Vagina (tissue), 2 donors: ENCODE measurements at regions of chr12 and their contacts with region 1.

Region 1: DNA sequence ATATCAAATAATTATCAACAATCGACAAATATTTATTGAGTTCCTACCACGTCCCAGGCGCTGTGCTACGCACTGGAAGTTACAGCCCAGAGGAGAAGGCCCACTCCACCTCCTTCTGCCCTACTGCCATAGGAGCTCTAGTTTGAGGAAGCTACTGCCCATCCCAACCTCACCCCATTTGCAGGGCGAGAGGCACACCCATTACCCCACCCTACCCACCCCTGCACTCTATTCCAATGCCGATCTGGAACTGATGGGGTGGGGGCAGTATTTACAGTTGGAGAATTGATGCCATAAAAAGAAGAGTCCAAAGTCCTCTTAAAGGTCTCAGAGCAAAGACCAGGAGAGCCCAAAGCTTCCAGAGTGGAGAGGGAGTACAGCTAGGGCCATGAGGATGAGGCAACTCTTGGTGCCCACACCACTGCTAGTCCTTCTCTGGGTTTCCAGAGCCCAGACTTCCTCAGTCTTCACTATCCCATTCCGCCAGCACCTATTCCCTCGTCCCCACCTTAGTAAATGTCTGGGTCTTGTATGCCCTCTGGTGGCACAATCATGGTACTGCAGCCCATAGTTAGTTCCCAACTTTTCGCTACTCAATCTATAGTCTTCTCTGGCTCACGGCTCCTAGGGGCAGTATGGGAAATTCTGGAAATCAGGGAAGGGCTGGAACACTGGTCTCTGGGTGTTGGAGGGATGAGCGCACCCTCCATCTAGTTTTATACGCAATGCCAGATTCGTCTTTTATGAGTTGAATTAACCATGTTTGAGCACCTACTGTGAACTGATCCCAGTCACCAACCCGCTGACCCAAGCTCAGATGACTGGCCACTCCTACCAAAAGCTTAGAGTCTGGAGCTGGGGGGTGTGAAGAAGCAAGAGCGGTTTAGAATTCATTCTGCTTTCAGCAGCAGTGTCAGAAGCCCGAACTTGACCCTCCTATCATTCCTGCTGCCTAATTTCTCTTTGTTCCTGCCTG is 6.9 kb upstream of the ADCY6 start:
- DNase-seq: peak in 1 of 2 donors; percentile 90
- H3K4me3 ChIP-seq: no peak overlapping the region
- H3K27ac ChIP-seq: no peak overlapping the region
- H3K4me1 ChIP-seq: peaks cover 15% of the 10 kb centered on the region
- H3K27me3 ChIP-seq: no peaks in the 10 kb centered on the region
- CTCF ChIP-seq: peak; percentile 97 to 99 (median 97)
- POLR2A ChIP-seq: no peak

Region 2: GRCh38 chr12:48758221-48758620 is 37.5 kb before region 1 on chr12:
- intact Hi-C with region 1: loop called (anchors 2 kb)
- DNase-seq: no peak
- H3K4me3 ChIP-seq: no peak overlapping the region
- H3K27ac ChIP-seq: no peak overlapping the region
- H3K4me1 ChIP-seq: no peaks in the 10 kb centered on the region
- H3K27me3 ChIP-seq: no peaks in the 10 kb centered on the region
- CTCF ChIP-seq: no peak
- POLR2A ChIP-seq: no peak

Region 3: GRCh38 chr12:48851883-48852733 is 56.3 kb after region 1 on chr12 and contains the start of gene DDX23:
- intact Hi-C with region 1: no loop called
- DNase-seq: peak; percentile 96 to 97
- H3K4me3 ChIP-seq: peak within 1 kb of the TSS; percentile 75 to 81
- H3K27ac ChIP-seq: peak within 1 kb of the TSS; percentile 72
- H3K4me1 ChIP-seq: peaks cover 27% of the 10 kb centered on the region
- H3K27me3 ChIP-seq: no peaks in the 10 kb centered on the region
- CTCF ChIP-seq: no peak
- POLR2A ChIP-seq: no peak
- total RNA-seq, gene DDX23: 57.9 TPM